Panc1 (cell line): ENCODE measurements at regions of chr10 and their contacts with region 1.

Region 1: GRCh38 chr10:93211991-93212390 is 138.3 kb downstream of the CYP26A1 start:
- DNase-seq: no peak
- ATAC-seq: no peak
- H3K4me3 ChIP-seq: no peak overlapping the region
- H3K27ac ChIP-seq: no peak overlapping the region
- H3K4me1 ChIP-seq: no peaks in the 10 kb centered on the region
- H3K27me3 ChIP-seq: no peaks in the 10 kb centered on the region; the same call in 1 of the 2 replicates
- CTCF ChIP-seq: no peak

Region 2: DNA sequence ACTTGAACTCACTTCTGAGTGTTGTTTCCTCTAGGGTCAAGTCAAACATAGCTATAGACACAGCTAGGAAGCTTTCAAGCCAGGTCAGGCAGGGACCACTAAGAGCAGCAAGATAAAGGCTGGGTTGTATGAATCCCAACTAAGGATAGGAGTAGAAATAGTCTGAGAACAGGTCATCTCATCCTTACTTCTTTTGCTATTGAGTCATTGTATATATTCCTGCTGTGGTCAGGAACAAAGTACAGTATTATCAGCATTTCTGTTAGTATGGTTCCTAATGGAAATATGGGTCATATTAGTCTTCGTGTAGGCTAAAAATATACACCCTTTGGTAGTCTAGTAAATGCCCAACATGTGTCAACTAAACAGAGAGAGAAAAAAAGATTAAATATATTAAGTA is 1143.1 kb before region 1 on chr10:
- CTCF ChIA-PET with region 1: no interaction called
- POLR2A ChIA-PET with region 1: no interaction called
- in situ Hi-C with region 1: no loop called
- intact Hi-C with region 1: no loop called
- DNase-seq: no peak
- ATAC-seq: no peak
- H3K4me3 ChIP-seq: no peak overlapping the region
- H3K27ac ChIP-seq: no peak overlapping the region
- H3K4me1 ChIP-seq: no peaks in the 10 kb centered on the region
- H3K27me3 ChIP-seq: no peaks in the 10 kb centered on the region
- CTCF ChIP-seq: no peak

Region 3: DNA sequence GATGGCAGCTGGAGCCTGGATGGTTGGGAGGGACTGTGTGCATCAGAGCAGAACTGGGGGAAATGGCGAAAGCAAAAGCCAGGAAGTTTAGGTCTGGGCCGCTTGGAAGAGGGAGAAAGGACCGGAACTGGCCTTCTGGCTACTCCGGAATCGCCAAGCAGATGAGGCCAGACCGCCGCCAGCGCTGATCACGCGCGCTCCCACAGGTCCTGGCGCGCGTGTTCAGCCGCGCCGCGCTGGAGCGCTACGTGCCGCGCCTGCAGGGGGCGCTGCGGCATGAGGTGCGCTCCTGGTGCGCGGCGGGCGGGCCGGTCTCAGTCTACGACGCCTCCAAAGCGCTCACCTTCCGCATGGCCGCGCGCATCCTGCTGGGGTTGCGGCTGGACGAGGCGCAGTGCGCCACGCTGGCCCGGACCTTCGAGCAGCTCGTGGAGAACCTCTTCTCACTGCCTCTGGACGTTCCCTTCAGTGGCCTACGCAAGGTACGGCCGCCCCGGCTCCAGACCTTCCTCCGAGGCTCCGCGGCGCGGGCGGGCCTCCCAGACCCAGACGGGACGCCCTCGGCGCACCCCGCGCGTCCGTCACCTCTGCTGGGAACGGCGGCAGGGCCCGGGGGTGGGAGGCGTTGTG is 149.4 kb before region 1 on chr10:
- CTCF ChIA-PET with region 1: no interaction called
- POLR2A ChIA-PET with region 1: no interaction called
- in situ Hi-C with region 1: no loop called
- intact Hi-C with region 1: no loop called
- DNase-seq: no peak
- ATAC-seq: peak; percentile 84
- H3K4me3 ChIP-seq: peak overlapping the region; percentile 55 to 73
- H3K27ac ChIP-seq: peak overlapping the region; percentile 60
- H3K4me1 ChIP-seq: peaks cover 9% of the 10 kb centered on the region; the same call in 1 of the 2 replicates
- H3K27me3 ChIP-seq: peaks cover 20% of the 10 kb centered on the region
- CTCF ChIP-seq: peak; percentile 98

Region 4: GRCh38 chr10:93319896-93320295 is 107.9 kb after region 1 on chr10:
- CTCF ChIA-PET with region 1: no interaction called
- POLR2A ChIA-PET with region 1: interaction called, 12 read pairs
- in situ Hi-C with region 1: no loop called
- intact Hi-C with region 1: no loop called
- DNase-seq: no peak
- ATAC-seq: no peak
- H3K4me3 ChIP-seq: no peak overlapping the region
- H3K27ac ChIP-seq: no peak overlapping the region
- H3K4me1 ChIP-seq: no peaks in the 10 kb centered on the region
- H3K27me3 ChIP-seq: no peaks in the 10 kb centered on the region
- CTCF ChIP-seq: no peak